ENCODE measurements at regions of chr20 and their contacts with region 1.

Region 1: DNA sequence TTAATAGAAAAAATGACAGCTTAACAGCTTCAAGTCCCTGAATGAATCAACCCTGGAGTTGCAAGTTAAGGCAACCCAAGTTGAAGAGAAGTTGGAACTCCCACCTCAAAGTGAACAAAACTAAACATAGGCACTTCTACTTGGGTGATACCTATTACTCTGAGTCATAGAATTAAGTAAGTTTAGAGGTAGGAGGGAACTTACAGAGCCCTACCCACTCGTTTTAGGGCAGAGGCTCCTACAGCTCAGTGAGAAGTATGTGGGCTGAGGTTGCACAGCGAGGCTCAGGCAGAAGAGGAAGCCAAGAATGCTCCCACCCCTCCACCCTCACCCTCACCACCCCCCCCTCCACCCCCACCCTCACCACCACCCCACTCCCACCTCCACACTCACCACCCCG is 42.2 kb downstream of the NFATC2 start:
- DNase-seq: peak in 8 of 9 donors; percentile 38 to 74 (median 54)
- ATAC-seq: peak; percentile 89
- H3K4me3 ChIP-seq: no peak overlapping the region
- H3K4me3 Mint-ChIP-seq: peak overlapping the region; percentile 21 to 99 (median 54)
- H3K27ac ChIP-seq: peak overlapping the region; percentile 58
- H3K27ac Mint-ChIP-seq: peak overlapping the region; percentile 65 to 100 (median 95)
- H3K4me1 ChIP-seq: peaks cover 59 to 60% of the 10 kb centered on the region in 2 donors
- H3K4me1 Mint-ChIP-seq: peaks cover 63 to 93% (median 87%) of the 10 kb centered on the region in 7 donors
- H3K27me3 ChIP-seq: no peaks in the 10 kb centered on the region
- H3K27me3 Mint-ChIP-seq: no peaks in the 10 kb centered on the region

Region 2: GRCh38 chr20:51480507-51481270 is 19.6 kb before region 1 on chr20:
- CTCF ChIA-PET with region 1: no interaction called
- POLR2A ChIA-PET with region 1: interaction called, 5 read pairs
- intact Hi-C with region 1: loop called in 1 of 2 experiments (anchors 1 kb)
- DNase-seq: peak in 2 of 9 donors; percentile 36 to 66
- ATAC-seq: peak; percentile 68
- H3K4me3 ChIP-seq: peak overlapping the region; percentile 8
- H3K4me3 Mint-ChIP-seq: peak overlapping the region; percentile 60 to 86 (median 76)
- H3K27ac ChIP-seq: peak overlapping the region; percentile 63
- H3K27ac Mint-ChIP-seq: peak overlapping the region; percentile 60 to 94 (median 88)
- H3K4me1 ChIP-seq: peaks cover 30 to 33% of the 10 kb centered on the region in 2 donors
- H3K4me1 Mint-ChIP-seq: peaks cover 64 to 90% (median 86%) of the 10 kb centered on the region in 7 donors
- H3K27me3 ChIP-seq: no peaks in the 10 kb centered on the region
- H3K27me3 Mint-ChIP-seq: no peaks in the 10 kb centered on the region

Region 3: DNA sequence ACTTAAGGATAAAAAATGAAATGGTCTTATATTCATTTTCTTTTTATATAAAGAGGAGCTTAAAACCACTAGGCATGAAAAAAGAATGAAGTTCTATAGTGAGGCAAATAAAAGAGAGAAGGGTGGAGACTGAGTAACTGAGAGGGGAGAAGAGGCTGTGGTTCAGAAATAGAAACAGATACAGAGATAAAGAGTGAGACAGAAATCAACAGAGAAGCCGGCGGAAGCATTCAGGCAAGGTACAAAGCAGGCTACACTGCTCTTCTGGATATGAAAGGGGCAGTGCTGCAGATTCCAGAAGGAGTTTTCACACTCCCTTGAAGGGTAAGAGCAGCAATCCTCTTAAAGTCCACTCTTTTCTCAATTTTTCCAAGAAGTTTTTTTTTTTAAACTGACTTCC is 12.3 kb after region 1 on chr20:
- CTCF ChIA-PET with region 1: interaction called, 8 read pairs
- POLR2A ChIA-PET with region 1: interaction called, 74 read pairs
- intact Hi-C with region 1: loop called (anchors 1 kb)
- DNase-seq: peak in 6 of 9 donors; percentile 34 to 61 (median 44)
- ATAC-seq: peak; percentile 80
- H3K4me3 ChIP-seq: peak overlapping the region; percentile 9
- H3K4me3 Mint-ChIP-seq: peak overlapping the region; percentile 47 to 81 (median 62)
- H3K27ac ChIP-seq: peak overlapping the region; percentile 61
- H3K27ac Mint-ChIP-seq: peak overlapping the region; percentile 82 to 94 (median 91)
- H3K4me1 ChIP-seq: peaks cover 60 to 61% of the 10 kb centered on the region in 2 donors
- H3K4me1 Mint-ChIP-seq: peaks cover 57 to 97% (median 89%) of the 10 kb centered on the region in 7 donors
- H3K27me3 ChIP-seq: no peaks in the 10 kb centered on the region
- H3K27me3 Mint-ChIP-seq: no peaks in the 10 kb centered on the region

Measured in naive thymus-derived CD4-positive, alpha-beta T cell (primary cell).